Activated B cell treated with CpG ODN at 0.5 μM for 24 hours (primary cell): ENCODE measurements at regions of chrX and their contacts with region 1.

Region 1: DNA sequence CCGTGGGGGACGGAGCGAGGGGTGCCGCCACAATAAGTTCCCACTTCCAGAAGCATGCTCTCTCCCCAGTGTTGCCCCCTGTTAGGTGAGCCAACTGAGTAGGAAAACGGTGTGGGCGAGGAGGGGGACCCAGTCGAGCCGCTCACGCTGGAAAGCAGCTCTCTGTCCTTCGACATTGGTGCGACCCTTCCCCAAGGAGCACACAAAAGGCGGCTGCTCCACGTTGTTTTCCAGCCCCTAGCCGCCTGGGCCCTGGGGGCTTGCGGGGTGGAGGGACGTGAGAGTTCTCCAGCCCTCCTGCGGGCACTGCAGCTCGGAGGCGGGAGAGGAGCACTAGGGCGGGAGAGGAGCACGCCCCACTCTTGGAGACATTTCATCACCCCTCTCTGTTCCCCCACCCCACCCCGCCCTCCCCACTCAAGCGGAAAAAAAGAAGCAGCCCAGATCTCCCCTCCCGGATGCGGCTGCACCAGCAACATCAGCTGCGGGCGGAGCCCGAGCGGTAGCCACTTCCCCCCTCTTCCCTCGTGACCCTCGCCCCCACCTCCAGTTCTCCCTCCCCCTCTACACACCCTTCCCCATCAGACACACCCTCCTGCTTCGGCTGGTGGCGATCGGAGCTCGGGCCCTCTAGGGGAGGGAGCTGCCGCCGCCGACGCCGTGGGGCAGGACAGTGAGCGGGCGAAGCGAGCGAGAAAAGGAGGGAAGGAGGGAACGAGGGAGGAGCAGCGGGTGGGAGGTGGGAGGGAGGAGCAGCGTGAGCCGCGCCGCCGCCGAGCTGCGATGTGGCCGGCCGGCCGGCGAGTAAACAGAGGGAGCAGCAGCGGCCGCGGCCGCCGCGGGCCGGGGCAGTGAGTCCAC is at the start of gene DOCK11:
- DNase-seq: peak; percentile 54
- ATAC-seq: peak; percentile 78
- H3K4me3 Mint-ChIP-seq: peak within 1 kb of the TSS; percentile 98
- H3K27ac Mint-ChIP-seq: peak within 1 kb of the TSS; percentile 99
- H3K4me1 Mint-ChIP-seq: peaks cover 27% of the 10 kb centered on the region
- H3K27me3 Mint-ChIP-seq: no peaks in the 10 kb centered on the region
- CTCF ChIP-seq: no peak
- total RNA-seq, gene DOCK11: 56.0 and 58.6 TPM in 2 replicates

Region 2: GRCh38 chrX:118345401-118346257 is 149.7 kb before region 1 on chrX and contains the start of gene WDR44:
- CTCF ChIA-PET with region 1: no interaction called
- POLR2A ChIA-PET with region 1: no interaction called
- intact Hi-C with region 1: loop called (anchors 1 kb)
- DNase-seq: peak; percentile 82
- ATAC-seq: peak; percentile 89
- H3K4me3 Mint-ChIP-seq: peak within 1 kb of the TSS; percentile 98
- H3K27ac Mint-ChIP-seq: peak within 1 kb of the TSS; percentile 97
- H3K4me1 Mint-ChIP-seq: peaks cover 39% of the 10 kb centered on the region
- H3K27me3 Mint-ChIP-seq: no peaks in the 10 kb centered on the region
- CTCF ChIP-seq: no peak
- total RNA-seq, gene WDR44: 15.3 and 18.7 TPM in 2 replicates

Region 3: DNA sequence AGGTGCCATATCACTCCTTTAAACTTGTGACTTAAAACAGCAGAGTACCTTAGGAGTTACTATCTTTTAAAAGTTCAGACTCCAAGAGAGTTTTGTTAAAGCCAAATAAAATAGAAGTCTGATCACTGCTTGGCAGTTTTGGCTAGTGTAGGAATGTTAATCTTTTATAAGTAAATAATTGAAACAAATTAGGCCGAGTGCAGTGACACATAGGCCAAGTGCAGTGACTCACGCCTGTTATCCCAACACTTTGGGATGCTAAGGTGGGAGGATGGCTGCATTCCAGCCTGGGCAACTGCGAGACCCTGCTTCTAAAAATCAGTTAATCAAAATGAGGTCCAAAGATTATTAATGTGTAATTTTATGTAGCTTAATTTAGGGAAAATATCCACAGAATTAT is 112.2 kb before region 1 on chrX:
- CTCF ChIA-PET with region 1: no interaction called
- POLR2A ChIA-PET with region 1: no interaction called
- intact Hi-C with region 1: no loop called
- DNase-seq: no peak
- ATAC-seq: no peak
- H3K4me3 Mint-ChIP-seq: no peak overlapping the region
- H3K27ac Mint-ChIP-seq: no peak overlapping the region
- H3K4me1 Mint-ChIP-seq: no peaks in the 10 kb centered on the region
- H3K27me3 Mint-ChIP-seq: no peaks in the 10 kb centered on the region
- CTCF ChIP-seq: no peak

Region 4: DNA sequence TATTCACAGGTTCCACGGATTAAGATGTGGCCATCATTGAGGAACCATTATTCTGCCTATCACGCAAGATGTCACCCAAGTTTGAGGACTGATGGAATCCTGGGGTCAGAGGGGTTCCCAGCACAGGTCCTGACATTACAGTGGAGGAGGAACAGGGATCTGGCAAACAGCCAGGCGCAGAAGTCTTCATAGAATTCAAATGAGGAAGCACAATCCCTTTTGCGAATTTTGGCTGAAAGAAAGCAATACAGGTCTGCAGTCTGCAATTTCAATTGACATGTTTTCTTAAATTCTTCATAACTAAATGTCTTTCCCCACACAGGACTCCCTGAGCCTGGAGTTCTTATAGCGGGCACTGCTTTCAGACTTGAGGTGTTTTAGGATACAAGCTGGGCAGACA is 14.8 kb after region 1 on chrX:
- CTCF ChIA-PET with region 1: no interaction called
- POLR2A ChIA-PET with region 1: interaction called, 5 read pairs
- intact Hi-C with region 1: loop called (anchors 1 kb)
- DNase-seq: no peak
- ATAC-seq: no peak
- H3K4me3 Mint-ChIP-seq: no peak overlapping the region
- H3K27ac Mint-ChIP-seq: peak overlapping the region; percentile 35
- H3K4me1 Mint-ChIP-seq: peaks cover 49% of the 10 kb centered on the region
- H3K27me3 Mint-ChIP-seq: no peaks in the 10 kb centered on the region
- CTCF ChIP-seq: no peak

Region 5: DNA sequence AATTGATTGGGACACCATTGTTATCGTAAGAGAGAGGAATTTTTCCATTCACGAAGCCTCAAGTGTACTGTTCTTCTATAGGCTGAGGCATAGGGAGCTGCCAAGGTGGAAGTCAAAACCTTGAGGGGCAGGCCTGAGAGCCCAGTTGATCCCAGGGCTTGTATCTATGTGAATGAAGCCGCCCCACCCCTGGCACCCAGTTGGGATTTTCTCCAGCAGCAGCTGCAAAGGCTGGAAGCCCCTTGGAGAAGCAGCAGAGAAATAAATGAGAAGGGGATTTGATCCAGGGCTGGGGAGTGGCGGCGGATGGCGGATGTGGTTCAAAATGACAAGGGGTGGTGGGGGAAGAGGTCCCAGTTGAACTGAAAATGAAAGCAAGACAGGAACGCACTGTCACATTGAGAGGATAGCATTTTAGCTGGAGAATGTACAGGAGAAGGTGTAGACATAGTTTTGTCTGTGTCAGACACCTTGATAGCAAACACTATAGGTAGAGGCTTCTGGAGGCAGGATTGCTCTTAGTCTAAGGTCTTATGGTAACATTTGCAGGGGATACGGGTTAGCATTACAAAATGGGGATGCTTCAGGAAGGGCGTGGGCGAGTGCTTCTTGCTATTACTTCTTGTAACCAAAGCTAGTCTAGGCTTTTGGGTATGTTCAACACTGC is 32.9 kb after region 1 on chrX:
- CTCF ChIA-PET with region 1: interaction called, 3 read pairs
- POLR2A ChIA-PET with region 1: interaction called, 118 read pairs
- intact Hi-C with region 1: loop called (anchors 1 kb)
- DNase-seq: peak; percentile 20
- ATAC-seq: peak; percentile 71
- H3K4me3 Mint-ChIP-seq: peak overlapping the region; percentile 88
- H3K27ac Mint-ChIP-seq: peak overlapping the region; percentile 97
- H3K4me1 Mint-ChIP-seq: peaks cover 82% of the 10 kb centered on the region
- H3K27me3 Mint-ChIP-seq: no peaks in the 10 kb centered on the region
- CTCF ChIP-seq: no peak

Region 6: GRCh38 chrX:118536687-118537461 is 41.6 kb after region 1 on chrX:
- CTCF ChIA-PET with region 1: interaction called, 6 read pairs
- POLR2A ChIA-PET with region 1: interaction called, 118 read pairs
- intact Hi-C with region 1: loop called (anchors 1 kb)
- DNase-seq: no peak
- ATAC-seq: peak; percentile 70
- H3K4me3 Mint-ChIP-seq: peak overlapping the region; percentile 64
- H3K27ac Mint-ChIP-seq: peak overlapping the region; percentile 82
- H3K4me1 Mint-ChIP-seq: peaks cover 68% of the 10 kb centered on the region
- H3K27me3 Mint-ChIP-seq: no peaks in the 10 kb centered on the region
- CTCF ChIP-seq: no peak

Region 7: DNA sequence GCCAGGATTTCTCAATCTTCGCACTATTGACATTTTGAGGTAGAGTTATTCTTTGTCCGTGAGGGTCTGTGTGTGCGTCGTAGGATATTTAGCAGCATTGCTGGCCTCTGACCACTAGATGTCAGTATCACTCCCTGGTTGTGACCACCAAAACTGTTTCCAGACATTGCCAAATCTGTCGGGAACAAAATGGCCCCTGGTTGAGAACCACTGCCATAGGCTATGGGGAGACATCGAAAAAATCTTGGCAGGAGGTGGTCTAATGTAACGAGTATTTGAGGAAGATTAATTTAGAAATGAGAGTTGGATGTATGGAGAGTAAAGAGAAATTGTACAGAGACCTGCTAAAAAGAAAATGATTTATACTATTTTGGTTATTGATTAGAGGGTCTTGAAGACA is 108.7 kb after region 1 on chrX:
- CTCF ChIA-PET with region 1: interaction called, 10 read pairs
- POLR2A ChIA-PET with region 1: interaction called, 4 read pairs
- intact Hi-C with region 1: loop called (anchors 2 kb)
- DNase-seq: no peak
- ATAC-seq: peak; percentile 62
- H3K4me3 Mint-ChIP-seq: no peak overlapping the region
- H3K27ac Mint-ChIP-seq: peak overlapping the region; percentile 70
- H3K4me1 Mint-ChIP-seq: peaks cover 9% of the 10 kb centered on the region
- H3K27me3 Mint-ChIP-seq: no peaks in the 10 kb centered on the region
- CTCF ChIP-seq: no peak

Region 8: DNA sequence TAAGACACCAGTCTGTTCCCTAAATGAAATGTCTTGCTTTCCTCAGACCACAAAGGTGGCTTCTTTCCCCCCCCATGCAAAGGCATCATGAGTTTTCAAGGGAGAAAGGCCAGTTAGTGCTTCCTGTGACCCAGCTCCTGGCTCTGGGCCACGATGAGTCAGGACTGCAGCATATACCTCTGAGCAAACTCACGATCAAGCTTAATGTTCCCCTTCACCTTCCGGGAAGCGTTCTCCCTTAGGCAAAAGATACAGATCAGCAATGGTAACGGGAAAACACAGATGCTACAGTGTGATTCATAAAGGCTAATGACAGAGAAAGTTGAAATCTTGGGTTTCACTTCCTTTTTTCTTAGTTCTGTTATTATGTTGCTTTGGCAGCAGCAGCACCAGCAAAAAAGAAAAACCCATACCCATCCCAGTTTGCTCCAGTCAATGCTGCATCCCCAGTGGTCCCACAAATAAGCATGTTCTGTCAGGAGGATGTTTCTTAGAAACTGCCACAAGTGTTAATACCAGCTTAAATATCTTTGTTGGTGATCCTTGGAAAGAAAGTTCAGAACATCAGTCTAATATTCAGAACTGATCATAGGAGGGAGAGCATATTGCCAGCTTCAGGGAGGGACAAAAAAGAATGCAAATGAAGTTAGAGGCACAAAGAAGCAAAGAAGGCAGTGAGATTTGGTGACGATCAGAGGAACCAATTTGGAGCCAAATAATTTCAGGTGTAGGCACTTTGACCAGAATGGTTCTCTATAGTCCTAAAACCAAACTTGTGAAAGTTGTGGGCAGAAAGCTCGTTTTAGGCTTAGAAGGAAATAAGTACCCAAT is 520.3 kb after region 1 on chrX:
- CTCF ChIA-PET with region 1: no interaction called
- POLR2A ChIA-PET with region 1: no interaction called
- intact Hi-C with region 1: loop called (anchors 5 kb)
- DNase-seq: peak; percentile 23
- ATAC-seq: peak; percentile 90
- H3K4me3 Mint-ChIP-seq: peak overlapping the region; percentile 53
- H3K27ac Mint-ChIP-seq: peak overlapping the region; percentile 94
- H3K4me1 Mint-ChIP-seq: peaks cover 28% of the 10 kb centered on the region
- H3K27me3 Mint-ChIP-seq: no peaks in the 10 kb centered on the region
- CTCF ChIP-seq: no peak